ENCODE measurements at regions of chr7 and their contacts with region 1.

Region 1: DNA sequence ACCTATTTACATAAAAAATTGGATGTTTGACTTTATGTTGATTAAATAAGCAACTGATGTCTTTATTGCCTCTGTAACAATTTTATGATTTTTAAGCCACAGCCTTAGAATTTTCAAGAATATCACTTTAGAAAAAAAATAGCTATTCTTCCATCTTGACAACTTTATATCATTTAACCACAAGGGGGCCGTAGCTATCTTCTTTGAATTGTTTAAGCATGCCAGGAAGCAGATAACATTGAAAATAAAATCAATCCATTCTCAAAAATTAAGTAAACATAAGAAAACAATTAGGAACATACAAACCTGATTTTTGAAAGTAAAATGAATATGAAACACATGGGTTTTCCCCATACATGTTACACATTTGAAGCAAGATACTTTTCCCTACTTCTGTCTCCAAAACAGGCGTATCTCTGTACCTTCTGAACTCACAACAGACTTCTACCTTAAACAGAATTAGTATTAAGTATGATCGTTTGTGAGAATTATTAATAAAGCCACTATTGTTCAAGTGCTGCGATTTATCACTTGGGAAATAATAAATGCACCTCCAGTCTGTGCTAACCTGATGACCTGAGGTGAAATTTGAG is 209.0 kb downstream of the CACNA2D1 start:
- DNase-seq: peak; percentile 33
- H3K4me3 ChIP-seq: no peak overlapping the region
- H3K27ac ChIP-seq: no peak overlapping the region
- H3K4me1 ChIP-seq: no peaks in the 10 kb centered on the region
- CTCF ChIP-seq: peak; percentile 84

Region 2: GRCh38 chr7:82572195-82572880 is 337.8 kb after region 1 on chr7:
- CTCF ChIA-PET with region 1: no interaction called
- POLR2A ChIA-PET with region 1: no interaction called
- intact Hi-C with region 1: loop called (anchors 10 kb)
- DNase-seq: peak; percentile 76
- H3K4me3 ChIP-seq: no peak overlapping the region
- H3K27ac ChIP-seq: no peak overlapping the region
- H3K4me1 ChIP-seq: no peaks in the 10 kb centered on the region
- CTCF ChIP-seq: peak; percentile 96

Region 3: DNA sequence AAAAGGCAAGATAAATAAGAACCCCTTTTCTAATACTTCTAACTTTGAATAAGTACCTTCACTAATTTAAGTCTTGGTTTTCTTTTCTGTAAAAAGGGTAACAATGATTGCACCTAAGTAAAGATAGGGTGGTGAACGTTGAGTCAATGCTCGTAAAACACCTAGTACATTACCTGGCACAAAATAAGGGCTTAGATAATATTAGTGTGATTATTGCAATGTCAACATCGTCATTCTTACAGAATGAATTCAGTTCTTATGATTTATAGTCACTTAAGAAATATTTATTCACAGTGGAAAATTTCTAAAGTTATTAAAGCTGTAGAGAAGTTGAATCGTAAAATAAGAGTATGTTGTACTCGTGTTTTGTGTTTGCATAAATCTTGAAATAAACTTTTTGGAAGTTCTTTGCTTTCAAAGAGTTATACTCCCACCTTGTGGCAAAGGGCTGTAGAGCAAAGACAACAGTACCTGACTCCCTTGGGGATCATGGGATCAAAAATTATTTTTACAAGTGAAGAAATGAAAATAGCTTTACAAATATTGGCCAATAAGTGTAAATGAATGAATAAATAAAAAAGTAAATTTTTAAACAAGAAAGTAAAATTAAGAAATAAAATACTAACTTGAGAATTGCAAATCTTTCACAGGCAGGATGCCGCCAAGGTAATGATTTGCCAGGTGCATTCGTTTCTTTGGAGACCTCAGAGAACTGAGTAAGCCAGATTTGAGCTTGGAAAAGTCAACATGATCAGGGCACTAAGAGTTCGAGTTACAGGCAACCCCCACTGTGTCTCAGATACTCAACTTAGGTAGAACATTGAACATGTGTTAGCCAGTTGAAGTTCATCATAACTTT is 494.8 kb after region 1 on chr7:
- CTCF ChIA-PET with region 1: no interaction called
- POLR2A ChIA-PET with region 1: no interaction called
- intact Hi-C with region 1: loop called (anchors 5 kb)
- DNase-seq: peak; percentile 34
- H3K4me3 ChIP-seq: no peak overlapping the region
- H3K27ac ChIP-seq: no peak overlapping the region
- H3K4me1 ChIP-seq: no peaks in the 10 kb centered on the region
- CTCF ChIP-seq: peak; percentile 85